Cardiac septum (tissue), 1 donor: ENCODE measurements at regions of chr5 and their contacts with region 1.

Region 1: GRCh38 chr5:181243512-181244343 is at the start of gene RACK1:
- DNase-seq: peak; percentile 92
- total RNA-seq, gene RACK1: 557 TPM

Region 2: DNA sequence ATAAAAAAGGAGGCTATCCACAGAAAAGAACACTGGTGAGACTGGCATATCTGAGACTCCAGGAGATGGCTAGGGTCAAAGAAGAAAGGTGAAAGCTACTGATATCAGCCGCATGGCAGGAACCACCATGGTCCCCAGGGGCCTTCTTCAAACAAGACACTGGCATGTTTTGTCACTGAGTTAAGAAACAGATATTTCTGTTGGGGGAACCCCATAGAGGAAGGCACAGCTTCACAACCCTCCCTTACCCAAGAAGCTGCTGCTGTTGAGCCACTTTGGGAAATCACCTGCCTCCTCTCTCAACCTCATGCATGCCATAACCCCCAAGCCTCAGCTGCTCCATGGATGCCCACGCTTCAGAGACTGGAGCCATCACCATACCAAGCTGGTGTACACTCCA is 268.4 kb before region 1 on chr5:
- intact Hi-C with region 1: no loop called
- DNase-seq: no peak

Region 3: GRCh38 chr5:181181650-181182565 is 61.8 kb before region 1 on chr5:
- intact Hi-C with region 1: no loop called
- DNase-seq: peak; percentile 20

Region 4: GRCh38 chr5:181223058-181223728 is 20.5 kb before region 1 on chr5 and contains the start of gene TRIM41:
- intact Hi-C with region 1: loop called (anchors 1 kb)
- DNase-seq: peak; percentile 99
- total RNA-seq, gene TRIM41: 33.0 TPM